ENCODE measurements at regions of chr2 and their contacts with region 1.

Region 1: DNA sequence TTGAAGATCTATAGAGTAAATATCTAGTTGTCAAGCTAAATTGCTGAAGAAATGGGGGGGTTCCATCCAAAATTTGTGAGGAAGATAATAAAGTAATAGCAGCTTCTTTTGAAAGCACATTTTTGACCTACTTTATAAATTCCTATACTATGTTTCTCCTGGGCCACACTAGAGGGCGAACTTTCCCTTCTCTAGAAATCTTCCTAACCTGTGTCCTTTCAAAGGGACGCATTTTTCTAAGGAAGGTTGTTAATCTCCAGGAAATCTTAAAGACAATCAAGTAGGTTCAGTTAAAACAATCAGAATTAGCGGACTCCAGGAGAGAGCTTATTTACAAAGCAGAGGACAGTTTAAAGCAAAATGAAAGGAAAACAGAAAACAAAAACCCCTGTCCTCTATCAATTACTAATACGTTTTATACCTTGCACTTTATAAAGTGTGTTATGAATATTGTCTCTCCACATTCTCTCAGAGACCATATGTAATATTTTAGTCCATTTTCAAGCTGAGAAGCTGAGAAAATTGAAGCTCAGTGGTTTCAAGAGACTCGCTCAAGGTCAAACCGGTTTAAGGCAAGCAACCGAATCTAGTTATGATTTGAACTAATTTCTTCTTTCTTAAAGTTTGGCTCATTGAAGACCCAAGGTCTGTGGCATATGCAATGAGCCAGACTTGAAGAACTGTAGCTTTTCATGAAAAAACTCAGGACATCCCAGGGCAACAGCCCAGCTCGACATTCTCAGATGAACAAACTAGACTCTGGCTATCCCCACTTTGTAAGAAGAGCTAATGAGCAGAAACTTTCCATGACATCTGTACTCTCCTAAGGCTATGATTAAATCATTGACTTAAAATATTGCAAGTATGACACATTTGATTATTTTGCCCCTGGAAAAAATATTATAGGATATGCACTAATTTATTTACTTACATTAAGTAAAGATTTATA is 273.6 kb downstream of the PAX3 start:
- DNase-seq: peak; percentile 73
- H3K4me3 ChIP-seq: no peak overlapping the region
- H3K27ac ChIP-seq: no peak overlapping the region
- H3K4me1 ChIP-seq: peaks cover 6% of the 10 kb centered on the region
- H3K27me3 ChIP-seq: no peaks in the 10 kb centered on the region
- CTCF ChIP-seq: peak; percentile 77

Region 2: DNA sequence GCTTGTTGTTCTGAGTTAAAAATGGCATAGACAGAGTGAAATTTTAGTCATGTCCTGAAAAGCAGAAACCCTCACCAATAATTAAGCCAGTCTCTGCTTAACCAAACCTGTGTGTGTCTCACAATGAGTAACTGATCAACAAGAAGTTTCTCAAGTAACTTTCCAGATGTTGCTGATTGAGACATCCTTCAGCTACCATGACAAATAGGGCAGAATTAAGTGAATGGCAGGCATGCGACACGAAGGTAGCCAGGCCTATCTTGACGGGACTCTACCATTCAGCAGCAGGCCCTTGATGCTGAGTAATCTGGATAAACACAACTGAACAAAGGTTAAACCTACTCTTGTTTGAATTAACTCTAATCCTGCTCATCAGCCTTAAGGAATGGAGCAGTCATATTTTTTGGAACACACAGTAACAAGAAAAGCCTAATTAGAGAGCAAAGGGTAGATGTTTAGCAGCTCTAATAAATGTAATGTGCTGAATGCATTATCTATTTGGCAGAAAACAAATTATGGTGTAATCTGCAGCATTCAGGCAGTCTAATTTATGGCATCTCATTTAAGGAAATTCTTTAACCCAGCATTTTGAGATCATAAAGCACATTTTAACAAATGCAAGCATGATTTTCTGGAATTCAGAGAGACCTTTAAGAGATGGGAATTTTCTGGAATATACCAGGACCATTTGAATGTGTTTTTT is 293.6 kb before region 1 on chr2:
- CTCF ChIA-PET with region 1: no interaction called
- POLR2A ChIA-PET with region 1: no interaction called
- intact Hi-C with region 1: no loop called
- DNase-seq: no peak
- H3K4me3 ChIP-seq: no peak overlapping the region
- H3K27ac ChIP-seq: no peak overlapping the region
- H3K4me1 ChIP-seq: peaks cover 4% of the 10 kb centered on the region
- H3K27me3 ChIP-seq: no peaks in the 10 kb centered on the region
- CTCF ChIP-seq: no peak

Region 3: GRCh38 chr2:221876016-221876415 is 149.2 kb before region 1 on chr2:
- CTCF ChIA-PET with region 1: interaction called, 11 read pairs
- POLR2A ChIA-PET with region 1: no interaction called
- intact Hi-C with region 1: no loop called
- DNase-seq: no peak
- H3K4me3 ChIP-seq: no peak overlapping the region
- H3K27ac ChIP-seq: no peak overlapping the region
- H3K4me1 ChIP-seq: no peaks in the 10 kb centered on the region
- H3K27me3 ChIP-seq: peaks cover 7% of the 10 kb centered on the region
- CTCF ChIP-seq: no peak

Region 4: DNA sequence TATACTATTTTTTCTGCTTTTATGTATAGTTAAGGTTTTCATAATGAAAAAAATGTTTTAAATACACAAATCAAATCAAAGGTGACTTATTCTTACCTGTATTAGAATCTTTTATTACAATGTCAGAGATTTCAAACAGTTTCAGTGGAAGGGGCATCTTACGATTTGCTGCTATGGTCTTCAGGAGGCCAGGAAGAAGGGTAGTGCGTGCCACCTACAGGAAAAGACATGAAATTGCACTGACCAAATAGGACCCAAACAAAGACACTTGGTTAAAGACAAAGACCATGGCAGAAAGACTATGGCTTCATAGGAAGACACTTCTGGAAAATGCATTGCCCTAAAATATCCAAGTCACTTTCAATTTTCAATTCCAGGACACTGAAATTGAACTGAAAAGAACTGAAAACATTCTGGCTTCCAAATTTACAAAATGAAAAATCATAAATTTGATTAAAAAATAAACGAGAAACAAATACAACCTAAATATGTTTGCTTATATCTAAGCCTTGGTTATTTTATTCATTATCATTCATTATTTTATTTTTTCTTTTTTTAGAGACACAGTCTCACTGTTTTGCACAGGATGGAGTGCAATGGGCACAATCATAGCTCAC is 588.6 kb after region 1 on chr2:
- CTCF ChIA-PET with region 1: interaction called, 5 read pairs
- POLR2A ChIA-PET with region 1: no interaction called
- intact Hi-C with region 1: loop called (anchors 5 kb)
- DNase-seq: peak; percentile 76
- H3K4me3 ChIP-seq: no peak overlapping the region
- H3K27ac ChIP-seq: no peak overlapping the region
- H3K4me1 ChIP-seq: peaks cover 7% of the 10 kb centered on the region
- H3K27me3 ChIP-seq: no peaks in the 10 kb centered on the region
- CTCF ChIP-seq: peak; percentile 86